Heart right ventricle (tissue), 16 donors: ENCODE measurements at regions of chr2 and their contacts with region 1.

Region 1: GRCh38 chr2:1550658-1551316 is 137.5 kb downstream of the TPO start:
- DNase-seq: peak; percentile 47 to 73
- ATAC-seq: peak; percentile 78 to 92 (median 84)
- H3K4me3 ChIP-seq: no peak overlapping the region
- H3K27ac ChIP-seq: no peak overlapping the region
- H3K4me1 ChIP-seq: peaks cover 0 to 17% (median 10%) of the 10 kb centered on the region in 9 donors
- H3K27me3 ChIP-seq: peaks cover 0 to 7% (median 0%) of the 10 kb centered on the region in 7 donors
- CTCF ChIP-seq: peak; percentile 97 to 99 (median 98)

Region 2: DNA sequence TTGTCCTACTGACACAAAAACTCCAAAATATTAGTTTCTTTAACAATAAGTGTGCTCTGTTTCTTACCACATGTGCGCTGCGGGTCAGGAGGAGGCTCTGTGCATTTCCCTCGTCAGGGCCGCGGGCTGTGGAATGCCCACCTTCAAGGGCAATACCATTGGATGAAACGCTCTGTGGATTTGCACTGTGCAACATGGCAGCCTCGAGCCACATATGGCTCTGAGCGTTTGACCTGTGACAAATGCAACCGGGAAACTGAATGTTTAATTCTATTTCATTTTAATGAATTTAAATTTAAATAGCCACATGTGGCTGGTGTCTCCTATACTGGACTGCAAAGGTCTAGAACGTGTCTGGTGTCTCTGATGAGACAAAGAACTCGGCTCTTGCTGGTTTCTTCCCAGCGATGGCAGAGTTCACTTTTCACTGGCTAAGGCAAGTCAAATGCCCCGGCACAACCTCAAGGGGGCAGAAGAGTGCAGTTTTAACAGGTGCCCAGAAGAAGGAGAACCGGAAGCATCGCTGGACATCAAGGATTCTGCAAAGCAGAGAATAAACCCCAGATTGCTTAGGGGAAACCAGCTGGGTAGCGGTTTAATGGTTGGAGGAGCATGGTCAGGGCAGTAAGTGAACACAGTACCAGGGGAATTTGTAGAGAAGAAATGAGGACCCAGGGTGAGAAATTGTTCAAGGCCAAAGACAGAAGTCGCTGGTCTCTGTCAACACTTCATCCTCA is 836.6 kb before region 1 on chr2:
- intact Hi-C with region 1: loop called (anchors 2 to 10 kb)
- DNase-seq: peak in 1 of 2 donors; percentile 33
- ATAC-seq: peak in 7 of 8 donors; percentile 34 to 67 (median 62)
- H3K4me3 ChIP-seq: no peak overlapping the region
- H3K27ac ChIP-seq: no peak overlapping the region
- H3K4me1 ChIP-seq: no peaks in the 10 kb centered on the region
- H3K27me3 ChIP-seq: peaks cover 0 to 77% (median 42%) of the 10 kb centered on the region in 7 donors
- CTCF ChIP-seq: peak; percentile 39 to 70 (median 69)

Region 3: DNA sequence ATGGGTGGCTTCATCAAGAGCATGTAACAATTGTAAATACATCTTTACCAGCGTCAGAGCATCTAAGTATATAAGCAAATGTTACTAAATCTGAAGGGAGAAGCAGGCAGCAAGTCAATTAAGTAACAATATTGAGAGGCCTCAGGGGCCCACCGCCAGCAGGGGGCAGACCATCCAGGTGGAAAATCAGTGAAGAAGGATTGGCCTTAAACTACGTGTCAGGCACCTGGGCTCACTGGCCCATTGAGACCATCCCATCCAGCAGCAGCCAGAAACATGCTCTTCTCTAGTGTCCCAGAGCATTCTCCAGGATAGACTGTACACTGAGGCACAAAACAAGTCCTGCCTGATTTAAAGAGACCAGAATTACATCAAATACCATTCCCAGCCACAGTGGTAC is 696.3 kb before region 1 on chr2:
- intact Hi-C with region 1: loop called in 5 of 10 experiments (anchors 5 to 10 kb)
- DNase-seq: no peak
- ATAC-seq: peak in 1 of 8 donors; percentile 42
- H3K4me3 ChIP-seq: no peak overlapping the region
- H3K27ac ChIP-seq: peak overlapping the region in 1 of 10 donors; percentile 1
- H3K4me1 ChIP-seq: peaks cover 0 to 7% (median 0%) of the 10 kb centered on the region in 9 donors
- H3K27me3 ChIP-seq: peaks cover 0 to 6% (median 0%) of the 10 kb centered on the region in 7 donors
- CTCF ChIP-seq: peak in 8 of 9 donors; percentile 37 to 66 (median 56)

Region 4: DNA sequence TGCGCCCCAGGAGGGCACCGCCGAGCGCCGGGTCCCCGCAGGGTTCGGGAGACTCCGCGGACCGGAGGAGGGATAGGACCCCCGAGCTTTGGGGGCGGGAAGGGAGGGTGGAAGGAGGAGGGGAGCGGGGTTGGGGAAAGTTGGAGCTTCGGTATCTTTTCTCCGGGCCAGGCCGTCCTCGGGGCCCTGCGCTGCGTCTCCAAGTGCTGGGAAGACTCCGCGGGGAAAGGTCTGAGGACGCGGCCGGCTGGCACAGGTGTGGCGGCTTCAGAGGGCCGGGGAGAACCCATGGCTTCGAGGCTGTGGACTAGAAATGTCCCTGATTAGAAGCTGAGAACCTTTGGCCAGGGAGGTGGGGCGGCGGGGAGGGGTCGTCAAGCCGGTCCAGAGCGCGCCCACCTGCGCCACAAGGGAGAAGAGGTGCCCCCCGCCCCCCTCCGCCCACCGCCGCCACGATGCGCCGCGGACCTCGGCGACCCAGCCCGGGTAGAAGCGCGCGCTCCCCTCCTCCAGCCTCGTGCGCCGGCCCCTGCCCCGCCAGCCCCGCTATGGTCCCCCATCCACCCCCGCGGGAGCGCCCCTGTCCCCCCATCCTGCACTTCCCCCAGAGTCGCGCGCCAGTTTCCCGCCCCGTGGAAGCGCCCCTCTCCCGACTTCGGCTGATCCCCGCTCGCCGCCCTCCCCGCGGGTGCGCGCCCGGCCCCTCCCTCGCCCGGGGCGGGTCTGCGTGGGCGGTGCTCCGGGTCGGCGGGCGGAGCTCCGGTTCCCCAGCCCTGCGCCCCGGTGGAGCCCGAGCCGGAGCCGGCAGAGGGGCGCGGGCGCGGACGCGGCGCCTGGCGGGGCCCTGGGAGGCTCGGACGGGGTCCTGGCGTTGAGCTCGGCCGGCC is 600.5 kb before region 1 on chr2 and contains the start of gene SNTG2:
- intact Hi-C with region 1: loop called (anchors 2 to 10 kb)
- DNase-seq: peak; percentile 20 to 43
- ATAC-seq: peak; percentile 63 to 91 (median 84)
- H3K4me3 ChIP-seq: peak within 1 kb of the TSS; percentile 32 to 66 (median 56)
- H3K27ac ChIP-seq: peak within 1 kb of the TSS in 2 of 10 donors; percentile 12 to 28
- H3K4me1 ChIP-seq: peaks cover 0 to 20% (median 12%) of the 10 kb centered on the region in 9 donors
- H3K27me3 ChIP-seq: peaks cover 7 to 84% (median 72%) of the 10 kb centered on the region in 7 donors
- CTCF ChIP-seq: no peak
- total RNA-seq, gene SNTG2: 0.49 to 2.8 (median 1.2) TPM in 9 of 10 donors, not detected in the other

Region 5: GRCh38 chr2:1140389-1141003 is 410.3 kb before region 1 on chr2:
- intact Hi-C with region 1: loop called in 1 of 10 experiments (anchors 5 kb)
- DNase-seq: peak in 1 of 2 donors; percentile 29
- ATAC-seq: peak in 5 of 8 donors; percentile 45 to 59 (median 47)
- H3K4me3 ChIP-seq: no peak overlapping the region
- H3K27ac ChIP-seq: peak overlapping the region; percentile 17 to 70 (median 48)
- H3K4me1 ChIP-seq: peaks cover 0 to 23% (median 0%) of the 10 kb centered on the region in 9 donors
- H3K27me3 ChIP-seq: peaks cover 0 to 14% (median 0%) of the 10 kb centered on the region in 7 donors
- CTCF ChIP-seq: peak; percentile 44 to 90 (median 74)

Region 6: DNA sequence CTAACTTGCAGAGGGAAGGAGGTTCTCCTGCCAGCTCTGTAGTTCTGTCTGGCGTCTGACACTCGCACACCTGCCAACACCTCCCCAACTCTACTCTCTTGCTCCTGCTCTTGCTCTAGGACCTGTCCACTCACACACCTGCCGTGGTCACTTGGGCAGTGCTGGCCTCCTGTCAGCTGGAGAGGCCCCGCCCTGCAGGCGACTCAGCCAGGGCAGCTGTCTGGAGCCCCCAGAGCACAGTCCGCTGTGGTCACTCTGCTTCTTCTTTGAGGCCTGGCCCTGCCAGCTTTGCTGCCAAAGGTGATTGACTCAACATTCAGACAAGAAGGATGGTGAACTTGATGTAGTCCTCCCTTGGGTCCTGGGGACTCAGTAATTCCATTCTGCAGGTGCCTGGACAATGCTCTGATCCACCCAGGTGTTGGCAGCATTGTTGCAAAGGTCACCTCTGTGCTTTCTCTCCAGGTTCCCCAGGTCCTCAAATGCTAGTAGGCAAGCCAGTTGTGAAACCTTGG is 118.8 kb before region 1 on chr2:
- intact Hi-C with region 1: no loop called
- DNase-seq: no peak
- ATAC-seq: no peak
- H3K4me3 ChIP-seq: no peak overlapping the region
- H3K27ac ChIP-seq: no peak overlapping the region
- H3K4me1 ChIP-seq: no peaks in the 10 kb centered on the region
- H3K27me3 ChIP-seq: no peaks in the 10 kb centered on the region
- CTCF ChIP-seq: no peak

Region 7: DNA sequence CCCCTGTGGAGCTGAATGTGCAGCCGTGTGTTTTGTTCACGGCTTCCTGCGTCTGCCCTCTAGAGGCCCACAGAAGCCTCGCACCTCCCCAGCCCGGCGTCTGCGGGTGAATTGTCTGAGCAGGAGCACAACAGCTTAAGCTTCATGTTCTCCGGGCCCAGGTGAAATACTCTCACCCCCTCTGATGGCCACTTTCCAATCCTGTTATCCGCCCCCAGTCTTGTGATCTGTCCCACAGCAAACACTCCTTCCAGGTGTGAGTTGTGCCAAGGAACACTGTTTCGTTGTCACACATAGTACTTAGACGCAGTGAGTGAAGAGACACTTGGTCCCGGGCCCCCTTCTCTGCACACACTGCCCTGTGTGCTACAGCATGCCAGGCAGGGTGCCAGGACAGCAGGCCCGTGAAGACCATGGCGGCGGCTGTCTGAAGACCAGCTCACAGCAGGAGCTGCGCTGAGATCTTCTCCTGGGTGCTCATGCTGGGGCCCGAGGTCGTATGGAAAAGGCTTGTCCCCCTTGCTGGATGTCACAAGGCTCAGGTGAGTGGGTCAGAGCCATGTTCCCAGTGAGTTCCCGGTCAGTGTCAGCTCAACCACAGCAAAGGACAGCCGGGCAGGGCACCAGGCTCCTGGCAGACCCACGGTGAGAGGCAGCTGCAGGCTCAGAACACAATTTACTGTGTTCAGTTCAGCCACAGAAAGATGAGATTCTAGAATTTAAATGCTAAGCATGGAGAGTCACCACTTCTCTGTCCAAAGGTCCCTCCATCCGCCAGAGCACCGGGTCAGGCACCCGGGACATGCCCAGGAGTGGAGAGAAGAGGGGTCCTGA is 200.4 kb after region 1 on chr2:
- intact Hi-C with region 1: loop called in 2 of 10 experiments (anchors 5 kb)
- DNase-seq: peak; percentile 66 to 67
- ATAC-seq: peak; percentile 71 to 86 (median 78)
- H3K4me3 ChIP-seq: no peak overlapping the region
- H3K27ac ChIP-seq: no peak overlapping the region
- H3K4me1 ChIP-seq: peaks cover 0 to 20% (median 6%) of the 10 kb centered on the region in 9 donors
- H3K27me3 ChIP-seq: peaks cover 0 to 26% (median 16%) of the 10 kb centered on the region in 7 donors
- CTCF ChIP-seq: peak; percentile 76 to 89 (median 84)

Region 8: DNA sequence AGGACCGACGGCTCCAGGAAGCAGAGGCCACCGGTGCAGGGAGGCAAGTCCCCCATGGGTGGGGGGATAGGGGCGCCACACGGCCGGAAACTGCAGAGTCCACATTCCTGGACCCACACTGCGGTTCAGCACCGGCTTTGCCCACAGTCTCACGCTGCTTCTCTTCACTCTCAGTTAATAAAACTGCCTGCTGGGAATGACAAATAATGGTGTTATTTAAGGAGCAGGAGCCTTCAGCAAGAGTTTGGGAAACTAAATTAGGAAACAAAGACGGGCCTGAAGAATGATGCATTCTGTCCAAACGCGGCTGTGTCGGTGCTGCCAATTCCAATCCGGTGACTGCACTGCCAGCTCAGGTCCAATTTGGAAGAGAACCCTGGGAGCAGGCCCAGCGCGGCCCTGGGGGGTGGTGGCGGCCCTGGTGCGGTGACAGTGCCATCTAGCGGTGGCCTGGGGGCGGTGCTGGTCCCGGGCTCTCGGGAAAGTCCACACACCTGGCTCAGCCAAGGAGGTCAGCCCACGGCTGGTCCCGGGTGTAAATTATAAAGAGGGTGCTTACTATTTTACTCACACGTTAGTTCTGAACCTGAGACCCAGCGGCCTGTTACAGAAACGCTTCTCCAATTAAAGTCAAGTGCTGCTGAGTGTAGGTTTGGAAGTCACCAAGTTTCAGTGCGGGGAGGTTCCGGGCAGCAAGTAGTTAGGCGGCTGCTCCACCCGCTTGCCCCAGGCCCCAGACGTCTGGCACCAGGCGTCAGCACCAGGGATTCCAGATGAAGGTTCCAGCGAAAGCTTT is 266.7 kb after region 1 on chr2:
- intact Hi-C with region 1: loop called in 1 of 10 experiments (anchors 5 kb)
- DNase-seq: peak; percentile 86 to 89
- ATAC-seq: peak; percentile 92 to 97 (median 94)
- H3K4me3 ChIP-seq: peak overlapping the region in 2 of 10 donors; percentile 7 to 10
- H3K27ac ChIP-seq: peak overlapping the region; percentile 3 to 89 (median 83)
- H3K4me1 ChIP-seq: peaks cover 8 to 26% (median 13%) of the 10 kb centered on the region in 9 donors
- H3K27me3 ChIP-seq: peaks cover 0 to 8% (median 0%) of the 10 kb centered on the region in 7 donors
- CTCF ChIP-seq: peak; percentile 95 to 99 (median 98)